ENCODE measurements at regions of chr10 and their contacts with region 1.

Region 1: GRCh38 chr10:12350167-12350872 is 973 bp downstream of the CAMK1D start:
- H3K4me3 Mint-ChIP-seq: peak overlapping the region; percentile 98
- H3K27ac Mint-ChIP-seq: peak overlapping the region; percentile 97
- H3K4me1 Mint-ChIP-seq: peaks cover 61% of the 10 kb centered on the region
- H3K27me3 Mint-ChIP-seq: peaks cover 26% of the 10 kb centered on the region

Region 2: GRCh38 chr10:12287772-12288171 is 62.5 kb before region 1 on chr10:
- intact Hi-C with region 1: no loop called
- H3K4me3 Mint-ChIP-seq: no peak overlapping the region
- H3K27ac Mint-ChIP-seq: no peak overlapping the region
- H3K4me1 Mint-ChIP-seq: peaks cover 6% of the 10 kb centered on the region
- H3K27me3 Mint-ChIP-seq: peaks cover 2% of the 10 kb centered on the region

Region 3: DNA sequence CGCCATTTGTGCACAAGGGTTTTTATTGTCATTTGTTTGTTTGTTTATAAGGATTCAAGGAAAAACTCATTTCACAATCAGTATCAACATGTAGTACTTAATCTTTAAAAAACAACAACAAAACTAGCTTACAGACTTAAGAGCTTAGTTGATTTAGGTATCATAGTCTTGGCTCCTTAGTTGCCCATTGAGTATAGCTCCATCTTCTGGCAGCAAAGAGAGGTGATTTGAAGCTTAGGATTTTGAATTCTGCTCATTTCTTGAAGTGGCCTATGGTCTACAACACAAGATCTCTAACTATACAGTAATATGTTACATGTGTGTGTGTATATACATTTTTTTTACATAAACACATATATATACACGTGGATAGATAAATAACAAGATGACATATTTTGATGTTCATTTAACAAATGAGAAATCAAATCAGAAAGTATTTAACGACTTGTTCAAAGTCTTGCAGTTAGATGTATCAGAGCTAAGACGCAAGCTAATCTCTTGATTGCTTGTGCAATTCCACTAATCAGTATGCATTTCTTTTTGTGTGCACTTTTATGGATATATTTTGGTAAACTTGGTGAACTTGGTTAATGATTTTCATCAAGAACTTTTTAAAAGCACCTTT is 306.3 kb after region 1 on chr10:
- intact Hi-C with region 1: loop called (anchors 10 kb)
- H3K4me3 Mint-ChIP-seq: no peak overlapping the region
- H3K27ac Mint-ChIP-seq: no peak overlapping the region
- H3K4me1 Mint-ChIP-seq: peaks cover 22% of the 10 kb centered on the region
- H3K27me3 Mint-ChIP-seq: no peaks in the 10 kb centered on the region